Thyroid gland (tissue), 4 donors: ENCODE measurements at regions of chr7 and their contacts with region 1.

Region 1: DNA sequence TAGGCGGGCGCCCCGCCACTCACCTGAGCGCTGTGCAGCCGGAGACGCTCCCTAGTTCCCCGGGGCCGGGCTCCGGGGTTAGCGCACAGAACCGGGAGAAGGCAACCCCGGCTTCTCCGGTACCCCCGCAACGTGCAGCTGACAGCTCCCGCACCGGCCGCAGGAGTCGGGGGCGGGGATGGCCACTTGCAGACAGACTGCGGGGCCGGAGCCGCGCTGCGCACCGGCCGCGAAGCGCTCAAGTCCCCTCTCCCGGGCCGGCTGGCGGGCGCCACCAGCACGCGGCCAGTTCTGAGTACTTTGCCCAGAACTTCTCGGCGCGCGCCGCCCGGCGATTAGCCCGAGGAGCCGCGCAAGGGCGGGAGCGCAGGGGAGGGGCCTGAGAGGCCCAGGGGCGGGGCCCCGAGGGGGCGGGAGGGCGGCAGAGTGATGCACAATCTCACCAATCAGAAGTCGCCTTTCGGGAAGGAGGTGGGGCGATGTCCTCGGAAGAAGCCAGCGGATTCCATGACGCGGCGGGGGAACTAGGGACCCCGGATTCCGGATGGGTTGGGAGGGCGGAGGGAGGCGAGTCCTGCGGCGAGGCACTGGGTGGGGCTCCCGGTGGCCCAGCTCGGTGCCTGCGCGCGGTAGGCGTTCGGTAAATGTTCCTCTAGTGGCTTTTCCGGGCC is at the start of gene OSBPL3:
- DNase-seq: peak; percentile 95 to 96
- H3K4me3 ChIP-seq: peak within 1 kb of the TSS; percentile 51 to 72 (median 62)
- H3K27ac ChIP-seq: peak within 1 kb of the TSS; percentile 83 to 97 (median 89)
- H3K4me1 ChIP-seq: peaks cover 3 to 16% of the 10 kb centered on the region in 2 donors
- H3K27me3 ChIP-seq: no peaks in the 10 kb centered on the region
- CTCF ChIP-seq: no peak
- POLR2A ChIP-seq: peak; percentile 55 to 91
- total RNA-seq, gene OSBPL3: 22.1 to 41.7 (median 34.3) TPM

Region 2: DNA sequence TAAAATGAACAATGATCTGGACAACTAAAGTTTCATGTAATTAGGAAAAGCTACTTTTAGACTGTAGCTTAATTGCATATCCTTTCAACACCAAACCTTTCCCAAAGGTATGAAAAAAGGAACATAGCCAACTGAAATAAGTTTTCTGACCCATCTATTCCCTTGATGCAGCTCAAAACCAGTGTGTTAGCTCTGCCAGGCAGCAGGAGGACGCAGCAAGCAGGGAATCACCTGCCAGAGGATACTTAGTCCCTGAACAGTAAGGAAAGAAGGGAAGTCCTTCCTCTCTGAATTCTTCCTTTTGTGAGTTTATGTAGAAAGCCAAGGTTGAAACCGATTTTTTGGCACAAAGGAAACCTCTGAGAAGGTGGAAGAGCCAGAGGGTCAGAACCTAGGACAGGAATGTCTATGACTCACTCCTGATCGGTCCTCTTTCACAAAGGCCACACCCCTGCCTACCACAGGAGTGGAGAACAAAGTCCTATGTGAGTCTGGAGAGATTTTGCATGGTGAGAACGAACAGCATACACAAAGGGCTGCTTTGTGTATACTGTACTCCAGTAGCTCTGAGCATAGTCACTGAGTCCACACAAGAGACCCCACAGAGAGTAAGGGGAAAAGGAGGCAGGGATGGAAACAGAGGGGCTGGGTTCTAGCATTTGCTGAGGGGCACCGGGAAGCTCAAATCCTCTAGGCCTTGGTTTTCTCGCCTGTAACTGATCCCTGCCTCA is 153.9 kb before region 1 on chr7:
- intact Hi-C with region 1: loop called (anchors 5 kb)
- DNase-seq: peak; percentile 44 to 51
- H3K4me3 ChIP-seq: no peak overlapping the region
- H3K27ac ChIP-seq: peak overlapping the region in 1 of 3 donors; percentile 51
- H3K4me1 ChIP-seq: peaks cover 0 to 12% of the 10 kb centered on the region in 2 donors
- H3K27me3 ChIP-seq: no peaks in the 10 kb centered on the region
- CTCF ChIP-seq: no peak
- POLR2A ChIP-seq: no peak

Region 3: DNA sequence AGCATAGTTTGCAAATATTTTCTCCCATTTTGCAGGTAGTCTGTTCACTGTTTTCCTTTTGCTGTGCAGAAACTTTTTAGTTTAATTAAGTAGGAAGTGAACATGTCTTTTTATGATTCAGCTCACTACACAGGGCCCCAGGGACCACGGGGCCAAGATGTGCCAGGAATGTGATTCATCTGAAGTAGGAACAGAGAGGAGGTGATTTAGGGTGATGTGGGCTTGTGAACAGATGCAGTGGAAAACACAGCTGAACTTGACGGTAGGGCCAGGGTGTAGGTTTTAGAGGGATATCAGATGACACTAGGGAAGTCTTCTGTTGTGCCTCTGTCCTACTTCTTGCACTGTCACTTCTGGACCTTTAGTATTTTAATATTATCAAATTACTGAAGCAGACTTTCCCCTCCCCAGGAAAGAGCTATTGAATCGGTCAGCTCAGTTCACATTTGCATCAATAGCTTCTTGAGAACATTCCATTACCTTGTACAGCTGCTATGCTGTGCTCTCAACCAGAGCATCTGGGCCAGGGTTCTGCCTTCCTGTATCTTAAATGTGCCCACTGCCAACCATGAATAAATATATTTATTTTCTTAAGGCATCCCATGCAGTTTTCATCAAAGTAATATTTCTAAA is 96.9 kb before region 1 on chr7:
- intact Hi-C with region 1: loop called (anchors 10 kb)
- DNase-seq: peak; percentile 82 to 88
- H3K4me3 ChIP-seq: no peak overlapping the region
- H3K27ac ChIP-seq: peak overlapping the region; percentile 63 to 85 (median 78)
- H3K4me1 ChIP-seq: peaks cover 28 to 55% of the 10 kb centered on the region in 2 donors
- H3K27me3 ChIP-seq: no peaks in the 10 kb centered on the region
- CTCF ChIP-seq: no peak
- POLR2A ChIP-seq: no peak

Region 4: GRCh38 chr7:25069900-25070443 is 90.0 kb after region 1 on chr7:
- intact Hi-C with region 1: loop called (anchors 10 kb)
- DNase-seq: peak; percentile 56 to 59
- H3K4me3 ChIP-seq: peak overlapping the region in 1 of 3 donors; percentile 10
- H3K27ac ChIP-seq: peak overlapping the region in 2 of 3 donors; percentile 25 to 47
- H3K4me1 ChIP-seq: peaks cover 0 to 9% of the 10 kb centered on the region in 2 donors
- H3K27me3 ChIP-seq: no peaks in the 10 kb centered on the region
- CTCF ChIP-seq: peak; percentile 84 to 98 (median 90)
- POLR2A ChIP-seq: no peak

Region 5: DNA sequence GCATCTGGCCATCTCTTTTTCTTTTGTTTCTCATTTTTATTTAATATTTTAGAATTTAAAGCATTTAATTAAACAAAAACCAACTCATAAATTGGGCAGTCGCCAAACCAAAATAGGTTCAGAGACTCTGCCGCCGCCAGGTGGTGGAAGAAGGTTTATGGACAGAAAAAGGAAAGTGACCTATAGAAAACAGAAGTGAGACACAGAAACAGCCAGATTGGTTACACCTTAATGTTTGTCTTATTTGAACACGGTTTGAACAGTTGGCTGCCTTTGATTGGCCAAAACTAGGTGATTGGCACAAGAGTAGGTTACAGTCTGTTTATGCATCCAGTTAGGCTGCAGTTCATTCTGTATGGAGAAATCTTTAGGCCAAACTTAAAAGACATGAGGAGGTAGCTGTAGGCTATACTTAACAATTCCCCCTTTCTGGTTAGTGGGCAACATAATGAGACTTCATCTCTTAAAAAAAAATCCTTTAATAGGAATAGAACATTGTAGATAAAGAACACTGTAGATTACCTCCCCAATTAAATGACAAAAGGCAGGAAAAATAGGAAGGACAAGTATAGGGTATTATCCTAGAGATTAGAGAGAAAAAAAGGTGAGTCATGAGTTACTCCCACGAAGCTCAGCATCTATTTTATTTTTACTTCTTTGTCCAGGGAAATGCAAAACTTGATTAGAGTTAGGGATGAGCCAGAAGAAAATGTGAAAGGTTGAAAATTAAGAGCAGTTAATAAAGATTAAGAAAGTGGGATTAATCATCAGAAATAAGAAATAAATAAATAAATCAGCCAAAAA is 169.0 kb after region 1 on chr7:
- intact Hi-C with region 1: no loop called
- DNase-seq: no peak
- H3K4me3 ChIP-seq: no peak overlapping the region
- H3K27ac ChIP-seq: no peak overlapping the region
- H3K4me1 ChIP-seq: no peaks in the 10 kb centered on the region
- H3K27me3 ChIP-seq: no peaks in the 10 kb centered on the region
- CTCF ChIP-seq: no peak
- POLR2A ChIP-seq: no peak

Region 6: GRCh38 chr7:25615003-25615402 is 635.0 kb after region 1 on chr7:
- intact Hi-C with region 1: no loop called
- DNase-seq: no peak
- H3K4me3 ChIP-seq: no peak overlapping the region
- H3K27ac ChIP-seq: peak overlapping the region in 1 of 3 donors; percentile 4
- H3K4me1 ChIP-seq: peaks cover 0 to 5% of the 10 kb centered on the region in 2 donors
- H3K27me3 ChIP-seq: no peaks in the 10 kb centered on the region
- CTCF ChIP-seq: no peak
- POLR2A ChIP-seq: no peak